ENCODE measurements at regions of chr2 and their contacts with region 1.

Region 1: DNA sequence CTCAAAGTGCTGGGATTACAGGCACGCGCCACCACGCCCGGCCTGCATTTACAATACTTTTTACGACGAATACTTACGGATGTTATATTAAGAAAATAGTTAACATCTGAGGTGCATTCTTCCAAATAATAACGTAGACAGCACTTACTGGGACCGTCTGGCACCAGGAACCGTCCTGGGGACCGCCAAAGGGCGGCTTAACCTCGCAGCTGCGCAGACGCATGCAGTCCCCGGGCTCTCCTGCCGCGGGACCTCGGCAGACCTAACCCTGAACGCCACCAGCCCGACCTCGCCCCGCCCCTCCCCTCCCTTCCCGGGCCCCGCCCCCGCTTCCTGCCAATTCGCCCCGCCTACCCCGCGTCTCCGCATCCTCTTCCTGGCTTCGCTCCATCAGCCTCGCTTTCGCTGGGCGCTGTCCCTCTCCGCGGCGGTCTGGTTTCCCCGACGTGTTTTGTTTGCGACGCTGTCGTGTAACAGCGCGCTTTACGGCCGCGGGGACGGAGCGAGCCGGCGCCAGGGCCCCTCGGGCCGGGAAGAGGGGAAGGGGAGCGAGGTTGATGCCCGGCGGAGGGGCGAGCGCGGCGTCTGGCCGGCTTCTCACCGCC is at the start of gene CNOT11:
- DNase-seq: peak; percentile 99
- H3K4me3 Mint-ChIP-seq: peak within 1 kb of the TSS; percentile 93
- H3K27ac Mint-ChIP-seq: peak within 1 kb of the TSS; percentile 96
- H3K4me1 Mint-ChIP-seq: peaks cover 44% of the 10 kb centered on the region
- H3K27me3 Mint-ChIP-seq: no peaks in the 10 kb centered on the region
- total RNA-seq, gene CNOT11: 65.0 and 69.6 TPM in 2 replicates

Region 2: DNA sequence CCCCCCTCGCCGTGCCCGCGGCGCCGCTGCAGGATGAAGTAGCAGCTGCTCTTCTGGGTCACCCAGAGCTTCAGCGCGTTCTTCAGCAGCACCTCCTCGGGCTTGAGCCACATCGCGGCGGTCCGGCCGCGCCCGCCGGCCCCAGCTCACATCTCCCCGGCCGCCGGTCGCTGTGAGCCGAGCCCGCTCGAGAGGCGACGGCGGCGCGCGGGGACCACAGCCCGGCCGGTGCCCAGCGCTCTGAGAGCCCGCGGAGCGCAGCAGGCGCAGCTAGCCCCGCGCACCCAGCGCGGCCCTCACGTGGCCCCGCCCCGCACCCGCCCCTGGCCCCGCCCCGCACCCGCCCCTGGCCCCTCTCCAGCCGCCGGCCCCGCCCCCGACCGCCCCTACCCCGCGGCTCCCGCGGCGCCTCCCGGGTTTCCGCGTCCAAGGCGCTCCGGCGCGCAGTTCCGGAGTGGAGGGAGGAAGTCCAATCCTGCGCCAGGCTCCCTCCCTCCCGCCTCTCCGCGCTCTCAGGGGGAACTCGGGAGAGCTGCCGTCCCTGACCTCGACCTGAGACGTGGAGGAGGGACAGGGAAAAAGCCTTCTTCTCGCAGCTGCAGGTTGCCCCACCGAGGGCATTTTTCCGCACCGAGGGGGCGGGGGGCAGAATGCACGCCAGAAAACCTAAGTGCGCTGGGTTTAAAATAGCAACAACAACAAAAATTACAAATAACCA is 101.2 kb before region 1 on chr2 and contains the start of gene TBC1D8:
- intact Hi-C with region 1: loop called (anchors 1 kb)
- DNase-seq: peak; percentile 91
- H3K4me3 Mint-ChIP-seq: peak within 1 kb of the TSS; percentile 76
- H3K27ac Mint-ChIP-seq: peak within 1 kb of the TSS; percentile 48
- H3K4me1 Mint-ChIP-seq: peaks cover 17% of the 10 kb centered on the region
- H3K27me3 Mint-ChIP-seq: peaks cover 76% of the 10 kb centered on the region
- total RNA-seq, gene TBC1D8: 1.3 and 1.4 TPM in 2 replicates

Region 3: GRCh38 chr2:101272045-101272784 is 19.7 kb after region 1 on chr2:
- intact Hi-C with region 1: loop called (anchors 1 kb)
- DNase-seq: peak; percentile 69
- H3K4me3 Mint-ChIP-seq: peak overlapping the region; percentile 55
- H3K27ac Mint-ChIP-seq: peak overlapping the region; percentile 83
- H3K4me1 Mint-ChIP-seq: peaks cover 35% of the 10 kb centered on the region
- H3K27me3 Mint-ChIP-seq: no peaks in the 10 kb centered on the region

Region 4: DNA sequence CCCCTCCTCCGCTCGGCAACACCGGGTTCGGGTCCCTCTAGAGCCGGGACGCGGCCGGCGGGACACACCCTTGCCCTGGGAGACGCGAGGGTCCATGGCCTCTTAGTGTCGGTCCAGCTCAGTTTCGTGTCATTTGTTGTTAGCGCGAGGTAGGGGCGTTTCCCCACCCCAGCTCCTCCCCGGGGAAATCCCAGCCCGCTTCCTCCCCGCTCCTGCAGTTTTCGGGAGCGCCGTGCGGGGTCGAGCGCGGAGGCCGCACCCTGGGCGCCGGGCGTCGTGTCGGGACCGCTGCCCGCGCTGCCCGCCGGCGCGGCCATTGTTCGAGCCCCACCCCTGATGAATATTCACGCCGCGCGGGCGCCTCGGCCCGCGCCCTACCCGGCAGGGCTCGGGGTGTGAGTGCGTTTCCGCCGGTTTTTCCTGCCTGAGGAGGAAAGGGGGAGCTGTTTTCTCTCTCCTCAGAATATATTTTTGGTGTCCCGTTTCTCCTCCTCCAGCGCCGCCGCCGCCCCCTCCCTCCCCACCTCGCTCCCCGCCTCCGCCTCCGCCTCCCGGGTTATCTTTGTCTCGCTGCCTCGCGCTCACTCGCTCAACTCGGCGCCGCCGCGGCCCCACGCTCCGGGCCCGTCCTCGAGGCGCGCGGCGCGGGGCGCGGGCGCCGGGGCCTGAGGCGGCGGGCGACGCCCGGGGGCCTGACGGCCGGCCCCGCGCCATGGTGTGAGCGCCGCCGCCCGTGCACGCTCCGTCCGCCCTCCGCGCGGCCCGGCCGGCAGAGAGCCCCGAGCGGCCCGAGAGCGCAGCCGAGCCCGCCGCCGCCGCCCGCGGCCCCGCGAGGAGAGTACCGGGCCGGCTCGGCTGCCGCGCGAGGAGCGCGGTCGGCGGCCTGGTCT is 444.9 kb after region 1 on chr2 and contains the start of gene MAP4K4:
- intact Hi-C with region 1: loop called (anchors 5 kb)
- DNase-seq: peak; percentile 91
- H3K4me3 Mint-ChIP-seq: peak within 1 kb of the TSS; percentile 85
- H3K27ac Mint-ChIP-seq: peak within 1 kb of the TSS; percentile 88
- H3K4me1 Mint-ChIP-seq: peaks cover 22% of the 10 kb centered on the region
- H3K27me3 Mint-ChIP-seq: no peaks in the 10 kb centered on the region
- total RNA-seq, gene MAP4K4: 41.2 and 42.6 TPM in 2 replicates

Measured in activated CD4-positive, alpha-beta T cell treated with anti-CD3 and anti-CD28 coated beads, Interleukin-2, amount 10 ng/mL, durations not matched to agents 24 days and 14 days (primary cell).